GM23248 (cell line): ENCODE measurements at regions of chr2 and their contacts with region 1.

Region 1: DNA sequence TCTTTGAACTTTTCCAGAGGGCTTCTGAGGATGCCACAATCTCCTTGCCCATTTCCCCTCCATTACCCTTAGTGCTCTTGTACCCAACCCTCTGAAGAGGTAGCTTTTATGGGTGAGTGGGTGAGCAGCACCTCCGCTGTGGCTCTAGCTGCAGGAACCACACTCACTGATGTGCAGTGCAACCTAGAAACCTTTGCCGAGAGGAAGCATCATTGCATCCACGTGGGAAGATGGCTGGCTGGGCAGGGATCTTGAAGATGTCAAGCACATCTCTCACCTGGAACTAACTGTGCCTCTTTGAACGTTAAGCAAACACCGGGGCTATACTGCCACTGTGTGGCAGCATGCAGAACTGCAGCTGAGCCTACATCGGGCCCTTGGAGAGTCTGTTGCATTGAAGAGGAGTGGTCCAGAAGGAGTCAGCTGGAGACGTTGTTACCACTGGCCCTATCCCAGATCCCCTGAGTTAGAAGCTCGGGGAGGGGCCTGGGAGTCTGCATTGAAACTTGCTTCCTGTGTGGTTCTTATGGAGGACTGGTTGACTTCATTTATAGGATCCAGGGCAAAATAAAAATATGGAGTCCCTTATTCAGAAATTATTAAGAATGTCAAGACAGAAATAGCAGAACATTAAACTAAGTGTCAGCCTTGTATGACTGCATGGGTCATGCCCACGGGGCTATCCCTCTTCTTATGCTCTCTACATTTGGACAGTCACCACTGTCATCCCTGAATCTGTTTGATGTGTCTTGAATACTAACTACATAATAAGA is 28.7 kb downstream of the IGFBP5 start:
- DNase-seq: peak; percentile 70
- H3K4me3 ChIP-seq: no peak overlapping the region
- H3K27ac ChIP-seq: no peak overlapping the region
- H3K4me1 ChIP-seq: peaks cover 13% of the 10 kb centered on the region
- H3K27me3 ChIP-seq: no peaks in the 10 kb centered on the region

Region 2: GRCh38 chr2:216519154-216519762 is 147.4 kb before region 1 on chr2:
- in situ Hi-C with region 1: loop called (anchors 5 kb)
- DNase-seq: peak; percentile 84
- H3K4me3 ChIP-seq: no peak overlapping the region
- H3K27ac ChIP-seq: no peak overlapping the region
- H3K4me1 ChIP-seq: peaks cover 16% of the 10 kb centered on the region
- H3K27me3 ChIP-seq: no peaks in the 10 kb centered on the region

Region 3: GRCh38 chr2:216789081-216789480 is 122.4 kb after region 1 on chr2:
- in situ Hi-C with region 1: no loop called
- DNase-seq: no peak
- H3K4me3 ChIP-seq: no peak overlapping the region
- H3K27ac ChIP-seq: no peak overlapping the region
- H3K4me1 ChIP-seq: peaks cover 23% of the 10 kb centered on the region
- H3K27me3 ChIP-seq: no peaks in the 10 kb centered on the region